Gastrocnemius medialis (tissue), 4 donors: ENCODE measurements at regions of chr14 and their contacts with region 1.

Region 1: DNA sequence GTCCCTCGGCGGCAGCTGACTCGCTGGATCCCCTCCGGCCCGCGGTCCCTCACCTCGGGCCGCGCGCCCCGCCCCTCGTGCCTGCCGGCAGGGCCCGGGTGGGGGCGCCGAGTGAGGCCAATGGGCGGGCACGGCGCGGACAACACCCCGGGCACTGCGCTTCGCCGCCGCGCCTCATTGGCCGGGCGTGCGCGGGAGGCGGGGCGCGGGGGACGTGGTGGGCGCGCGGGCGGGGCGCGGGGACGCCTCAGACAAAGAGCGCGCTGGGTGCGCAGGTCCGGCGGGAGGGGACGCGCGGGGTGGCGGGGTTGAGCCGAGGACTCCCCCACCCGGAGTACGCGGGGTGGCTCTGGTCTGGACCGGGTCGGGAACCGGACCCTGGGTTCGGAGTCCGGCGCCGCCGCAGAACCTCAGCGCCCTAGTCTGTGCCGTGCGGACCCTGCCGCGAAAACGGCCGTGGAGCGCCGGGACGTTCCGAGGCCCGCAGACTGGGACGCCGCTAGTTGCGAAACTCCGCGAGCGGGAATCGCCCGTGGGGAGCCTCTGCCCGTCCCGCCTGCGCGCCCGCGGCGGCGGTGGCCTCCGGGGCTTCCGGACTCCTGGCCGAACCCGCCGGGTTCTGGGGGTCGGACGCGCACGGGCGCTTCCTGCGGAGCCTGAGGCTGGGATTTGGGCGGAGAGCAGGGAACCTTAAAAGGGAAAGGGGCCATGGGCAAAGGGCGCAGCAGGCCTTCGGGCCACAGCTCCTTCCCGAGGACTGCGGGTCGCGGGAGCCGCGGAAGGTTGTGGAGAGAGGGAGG is at the start of gene SLC25A29:
- DNase-seq: peak; percentile 79 to 89
- ATAC-seq: peak; percentile 83 to 85
- H3K4me3 ChIP-seq: peak within 1 kb of the TSS; percentile 79 to 99 (median 96)
- H3K27ac ChIP-seq: peak within 1 kb of the TSS; percentile 93 to 98 (median 95)
- H3K4me1 ChIP-seq: peaks cover 10 to 27% of the 10 kb centered on the region in 2 donors
- H3K27me3 ChIP-seq: no peaks in the 10 kb centered on the region
- CTCF ChIP-seq: no peak
- POLR2A ChIP-seq: peak; percentile 89 to 94
- total RNA-seq, gene SLC25A29: 9.0 to 17.4 (median 13.4) TPM

Region 2: GRCh38 chr14:100375963-100376735 is 69.5 kb after region 1 on chr14:
- in situ Hi-C with region 1: no loop called
- intact Hi-C with region 1: loop called (anchors 1 kb)
- DNase-seq: peak; percentile 85 to 92
- ATAC-seq: peak; percentile 86 to 90
- H3K4me3 ChIP-seq: peak within 1 kb of the TSS; percentile 73 to 90 (median 85)
- H3K27ac ChIP-seq: peak within 1 kb of the TSS; percentile 80 to 88 (median 86)
- H3K4me1 ChIP-seq: peaks cover 20 to 22% of the 10 kb centered on the region in 2 donors
- H3K27me3 ChIP-seq: no peaks in the 10 kb centered on the region
- CTCF ChIP-seq: no peak
- POLR2A ChIP-seq: peak; percentile 78 to 79